Activated B cell treated with CpG ODN at 0.5 μM for 24 hours (primary cell): ENCODE measurements at regions of chr1 and their contacts with region 1.

Region 1: GRCh38 chr1:15633756-15634420 is 16.6 kb downstream of the DDI2 start:
- DNase-seq: no peak
- ATAC-seq: no peak
- H3K4me3 Mint-ChIP-seq: no peak overlapping the region
- H3K27ac Mint-ChIP-seq: no peak overlapping the region
- H3K4me1 Mint-ChIP-seq: no peaks in the 10 kb centered on the region
- H3K27me3 Mint-ChIP-seq: no peaks in the 10 kb centered on the region
- CTCF ChIP-seq: no peak

Region 2: DNA sequence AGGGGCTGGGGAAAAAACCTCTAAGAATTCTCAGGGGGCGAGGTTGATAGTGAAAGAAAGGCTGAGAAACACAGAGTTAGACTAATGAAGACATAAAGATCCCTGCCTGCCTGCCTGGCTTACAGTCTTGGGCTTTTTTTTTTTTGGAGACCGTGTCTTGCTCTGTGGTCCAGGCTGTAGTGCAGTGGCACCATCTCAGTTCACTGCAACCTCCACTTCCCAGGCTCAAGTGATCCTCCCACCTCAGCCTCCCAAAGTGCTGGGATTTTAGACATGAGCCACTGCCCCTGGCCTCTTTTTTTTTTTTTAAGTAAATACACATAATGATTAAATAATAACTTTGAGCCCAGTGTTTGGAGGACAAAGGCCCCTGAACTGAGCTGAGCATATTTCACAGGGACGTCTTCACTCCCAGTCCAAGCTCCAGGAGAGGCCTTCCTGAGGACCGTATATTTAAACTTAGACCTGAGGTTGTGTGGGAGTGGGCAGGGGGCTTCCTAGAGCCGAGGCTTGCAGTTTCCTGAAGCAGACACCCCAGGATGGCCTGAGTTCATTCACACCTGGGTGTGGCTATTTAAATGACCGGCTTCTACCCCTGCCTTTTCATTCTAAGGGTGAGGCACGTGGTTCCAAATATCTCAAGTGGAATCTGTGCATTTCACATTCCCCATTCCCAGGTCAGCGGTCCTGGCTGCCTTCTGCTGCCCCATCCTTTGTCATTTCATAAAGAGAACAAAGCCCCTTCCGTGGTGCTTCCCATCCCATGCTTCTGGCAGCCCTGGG is 240.2 kb before region 1 on chr1:
- CTCF ChIA-PET with region 1: no interaction called
- POLR2A ChIA-PET with region 1: interaction called, 14 read pairs
- intact Hi-C with region 1: no loop called
- DNase-seq: no peak
- ATAC-seq: no peak
- H3K4me3 Mint-ChIP-seq: no peak overlapping the region
- H3K27ac Mint-ChIP-seq: no peak overlapping the region
- H3K4me1 Mint-ChIP-seq: no peaks in the 10 kb centered on the region
- H3K27me3 Mint-ChIP-seq: peaks cover 9% of the 10 kb centered on the region
- CTCF ChIP-seq: no peak

Region 3: DNA sequence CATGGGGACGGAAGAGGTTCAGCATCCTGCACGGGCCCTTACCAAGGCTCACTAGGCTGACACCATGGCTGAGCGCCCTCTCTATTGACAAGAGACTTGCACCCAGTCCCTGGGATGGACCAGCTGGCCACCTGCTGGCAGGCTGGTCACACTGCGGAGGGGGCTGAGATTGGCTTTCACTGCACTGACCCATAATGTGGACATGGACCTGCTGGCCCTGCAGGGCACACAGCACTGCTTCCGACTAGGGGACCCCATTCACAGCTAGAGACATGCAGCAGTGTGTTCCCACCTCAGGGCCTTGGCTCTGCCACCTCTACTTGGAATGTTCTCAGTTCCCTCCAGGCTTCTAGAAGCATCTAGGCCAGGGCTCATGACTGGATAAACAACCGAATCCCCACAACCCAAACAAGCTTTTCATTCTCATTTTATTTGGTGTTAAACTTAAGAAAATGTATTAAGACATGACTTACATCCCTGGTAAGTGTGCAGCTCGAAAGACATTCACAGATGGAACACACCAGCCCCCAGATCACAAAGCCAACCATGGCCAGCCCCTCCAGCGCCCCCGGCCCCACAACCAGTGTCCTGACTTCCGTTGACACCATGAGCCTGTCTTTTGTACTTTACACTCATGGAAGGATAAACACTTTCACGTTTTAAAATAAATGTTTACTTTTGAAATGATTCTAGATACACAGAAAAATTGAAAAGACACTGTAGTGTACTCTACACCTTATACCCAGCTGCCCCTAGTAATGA is 360.9 kb after region 1 on chr1:
- CTCF ChIA-PET with region 1: no interaction called
- POLR2A ChIA-PET with region 1: no interaction called
- intact Hi-C with region 1: no loop called
- DNase-seq: no peak
- ATAC-seq: peak; percentile 94
- H3K4me3 Mint-ChIP-seq: no peak overlapping the region
- H3K27ac Mint-ChIP-seq: no peak overlapping the region
- H3K4me1 Mint-ChIP-seq: no peaks in the 10 kb centered on the region
- H3K27me3 Mint-ChIP-seq: no peaks in the 10 kb centered on the region
- CTCF ChIP-seq: no peak